GM10248 (cell line): ENCODE measurements at regions of chr5 and their contacts with region 1.

Region 1: GRCh38 chr5:34915139-34915855 is at the starts of genes BRIX1 and RAD1:
- DNase-seq: peak; percentile 92
- CTCF ChIP-seq: no peak

Region 2: GRCh38 chr5:34551911-34552433 is 363.3 kb before region 1 on chr5:
- CTCF ChIA-PET with region 1: no interaction called
- POLR2A ChIA-PET with region 1: no interaction called
- DNase-seq: no peak
- CTCF ChIP-seq: no peak

Region 3: GRCh38 chr5:34929150-34929719 is 13.9 kb after region 1 on chr5 and contains the start of gene DNAJC21:
- CTCF ChIA-PET with region 1: interaction called, 25 read pairs
- POLR2A ChIA-PET with region 1: interaction called, 41 read pairs
- DNase-seq: peak; percentile 99
- CTCF ChIP-seq: no peak

Region 4: GRCh38 chr5:34941936-34942335 is 26.6 kb after region 1 on chr5:
- CTCF ChIA-PET with region 1: no interaction called
- POLR2A ChIA-PET with region 1: no interaction called
- DNase-seq: no peak
- CTCF ChIP-seq: no peak